ENCODE measurements at regions of chr11 and their contacts with region 1.

Region 1: DNA sequence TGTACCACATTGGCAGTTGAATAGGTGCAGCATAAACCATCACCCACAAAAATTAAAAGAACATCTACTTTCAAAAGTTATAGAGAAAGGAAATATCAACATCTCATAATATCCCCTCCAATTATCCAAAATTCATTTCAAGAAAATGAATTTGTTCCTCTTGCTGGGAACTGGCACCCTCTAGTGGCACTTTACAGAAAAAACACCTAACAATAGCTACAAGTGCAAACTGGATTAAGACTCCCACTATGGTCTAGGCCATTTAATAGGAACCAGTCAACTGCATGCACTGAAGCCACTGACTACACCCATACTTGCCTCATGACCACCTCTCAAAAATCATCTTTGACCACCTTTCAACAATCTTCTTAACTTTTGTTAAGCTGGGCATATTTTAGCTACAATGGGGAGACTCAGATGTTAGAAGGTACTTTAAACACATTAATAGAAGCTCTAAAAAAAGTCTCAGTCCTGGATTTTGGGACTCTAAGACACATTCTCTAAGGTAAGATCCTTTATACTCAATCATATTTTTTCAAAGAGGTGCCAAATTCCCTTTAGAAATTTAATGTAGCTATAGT is 17.3 kb downstream of the TRAF6 start:
- DNase-seq: peak in 1 of 2 experiments; percentile 45
- H3K4me3 ChIP-seq: no peak overlapping the region
- H3K4me3 Mint-ChIP-seq: no peak overlapping the region
- H3K27ac Mint-ChIP-seq: no peak overlapping the region
- H3K4me1 ChIP-seq: no peaks in the 10 kb centered on the region
- H3K4me1 Mint-ChIP-seq: no peaks in the 10 kb centered on the region
- H3K27me3 ChIP-seq: no peaks in the 10 kb centered on the region
- H3K27me3 Mint-ChIP-seq: no peaks in the 10 kb centered on the region
- CTCF ChIP-seq: peak; percentile 71 to 83

Region 2: GRCh38 chr11:35919244-35919643 is 573.6 kb before region 1 on chr11:
- CTCF ChIA-PET with region 1: no interaction called
- POLR2A ChIA-PET with region 1: no interaction called
- intact Hi-C with region 1: no loop called
- DNase-seq: no peak
- H3K4me3 ChIP-seq: no peak overlapping the region
- H3K4me3 Mint-ChIP-seq: no peak overlapping the region
- H3K27ac Mint-ChIP-seq: no peak overlapping the region
- H3K4me1 ChIP-seq: no peaks in the 10 kb centered on the region
- H3K4me1 Mint-ChIP-seq: peaks cover 5% of the 10 kb centered on the region
- H3K27me3 ChIP-seq: no peaks in the 10 kb centered on the region; the same call in 1 of the 2 replicates
- H3K27me3 Mint-ChIP-seq: peaks cover 9% of the 10 kb centered on the region
- CTCF ChIP-seq: no peak

Region 3: DNA sequence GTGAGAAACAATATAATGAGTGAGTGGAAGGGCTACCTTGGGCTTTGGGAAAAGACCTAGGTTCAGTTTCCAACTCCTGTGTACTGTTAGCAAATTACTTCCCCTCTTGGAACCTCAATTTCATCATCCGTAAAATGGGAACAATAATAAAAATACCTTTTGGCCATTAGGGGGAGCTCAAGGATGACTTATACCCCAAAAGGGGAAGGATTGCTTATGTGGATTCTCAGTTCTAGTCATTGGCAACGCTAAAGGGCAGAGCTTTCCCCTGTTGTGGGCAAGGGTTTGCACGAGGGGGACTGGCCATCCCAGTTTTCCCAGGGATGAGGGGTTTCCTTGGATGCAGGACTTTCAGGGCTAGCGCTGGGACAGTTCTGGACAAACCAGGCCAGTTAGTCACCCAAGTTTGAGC is 200.5 kb before region 1 on chr11:
- CTCF ChIA-PET with region 1: interaction called, 8 read pairs
- POLR2A ChIA-PET with region 1: no interaction called
- intact Hi-C with region 1: loop called (anchors 1 kb)
- DNase-seq: peak in 1 of 2 experiments; percentile 32
- H3K4me3 ChIP-seq: no peak overlapping the region
- H3K4me3 Mint-ChIP-seq: no peak overlapping the region
- H3K27ac Mint-ChIP-seq: no peak overlapping the region
- H3K4me1 ChIP-seq: no peaks in the 10 kb centered on the region
- H3K4me1 Mint-ChIP-seq: peaks cover 15% of the 10 kb centered on the region
- H3K27me3 ChIP-seq: no peaks in the 10 kb centered on the region
- H3K27me3 Mint-ChIP-seq: peaks cover 19% of the 10 kb centered on the region
- CTCF ChIP-seq: peak; percentile 21 to 63

Region 4: GRCh38 chr11:36306888-36307287 is 185.9 kb before region 1 on chr11:
- CTCF ChIA-PET with region 1: interaction called, 4 read pairs
- POLR2A ChIA-PET with region 1: no interaction called
- intact Hi-C with region 1: loop called (anchors 5 kb)
- DNase-seq: peak in 1 of 2 experiments; percentile 35
- H3K4me3 ChIP-seq: no peak overlapping the region
- H3K4me3 Mint-ChIP-seq: no peak overlapping the region
- H3K27ac Mint-ChIP-seq: no peak overlapping the region
- H3K4me1 ChIP-seq: no peaks in the 10 kb centered on the region
- H3K4me1 Mint-ChIP-seq: no peaks in the 10 kb centered on the region
- H3K27me3 ChIP-seq: no peaks in the 10 kb centered on the region
- H3K27me3 Mint-ChIP-seq: no peaks in the 10 kb centered on the region
- CTCF ChIP-seq: peak; percentile 66 to 68

Region 5: GRCh38 chr11:36441610-36442208 is 51.1 kb before region 1 on chr11:
- CTCF ChIA-PET with region 1: no interaction called
- POLR2A ChIA-PET with region 1: no interaction called
- intact Hi-C with region 1: no loop called
- DNase-seq: no peak
- H3K4me3 ChIP-seq: no peak overlapping the region
- H3K4me3 Mint-ChIP-seq: no peak overlapping the region
- H3K27ac Mint-ChIP-seq: no peak overlapping the region
- H3K4me1 ChIP-seq: no peaks in the 10 kb centered on the region
- H3K4me1 Mint-ChIP-seq: no peaks in the 10 kb centered on the region
- H3K27me3 ChIP-seq: no peaks in the 10 kb centered on the region
- H3K27me3 Mint-ChIP-seq: peaks cover 2% of the 10 kb centered on the region
- CTCF ChIP-seq: no peak

Region 6: GRCh38 chr11:36460220-36460619 is 32.6 kb before region 1 on chr11:
- CTCF ChIA-PET with region 1: no interaction called
- POLR2A ChIA-PET with region 1: no interaction called
- intact Hi-C with region 1: no loop called
- DNase-seq: no peak
- H3K4me3 ChIP-seq: no peak overlapping the region
- H3K4me3 Mint-ChIP-seq: no peak overlapping the region
- H3K27ac Mint-ChIP-seq: no peak overlapping the region
- H3K4me1 ChIP-seq: peaks cover 3% of the 10 kb centered on the region
- H3K4me1 Mint-ChIP-seq: peaks cover 5% of the 10 kb centered on the region
- H3K27me3 ChIP-seq: no peaks in the 10 kb centered on the region
- H3K27me3 Mint-ChIP-seq: no peaks in the 10 kb centered on the region
- CTCF ChIP-seq: no peak

Region 7: GRCh38 chr11:36532941-36533601 is 40.3 kb after region 1 on chr11:
- CTCF ChIA-PET with region 1: no interaction called
- POLR2A ChIA-PET with region 1: no interaction called
- intact Hi-C with region 1: loop called (anchors 1 kb)
- DNase-seq: no peak
- H3K4me3 ChIP-seq: no peak overlapping the region
- H3K4me3 Mint-ChIP-seq: no peak overlapping the region
- H3K27ac Mint-ChIP-seq: no peak overlapping the region
- H3K4me1 ChIP-seq: no peaks in the 10 kb centered on the region
- H3K4me1 Mint-ChIP-seq: no peaks in the 10 kb centered on the region
- H3K27me3 ChIP-seq: no peaks in the 10 kb centered on the region
- H3K27me3 Mint-ChIP-seq: peaks cover 3% of the 10 kb centered on the region
- CTCF ChIP-seq: no peak

Measured in Caco-2 (cell line).